ENCODE measurements at regions of chr7 and their contacts with region 1.

Region 1: DNA sequence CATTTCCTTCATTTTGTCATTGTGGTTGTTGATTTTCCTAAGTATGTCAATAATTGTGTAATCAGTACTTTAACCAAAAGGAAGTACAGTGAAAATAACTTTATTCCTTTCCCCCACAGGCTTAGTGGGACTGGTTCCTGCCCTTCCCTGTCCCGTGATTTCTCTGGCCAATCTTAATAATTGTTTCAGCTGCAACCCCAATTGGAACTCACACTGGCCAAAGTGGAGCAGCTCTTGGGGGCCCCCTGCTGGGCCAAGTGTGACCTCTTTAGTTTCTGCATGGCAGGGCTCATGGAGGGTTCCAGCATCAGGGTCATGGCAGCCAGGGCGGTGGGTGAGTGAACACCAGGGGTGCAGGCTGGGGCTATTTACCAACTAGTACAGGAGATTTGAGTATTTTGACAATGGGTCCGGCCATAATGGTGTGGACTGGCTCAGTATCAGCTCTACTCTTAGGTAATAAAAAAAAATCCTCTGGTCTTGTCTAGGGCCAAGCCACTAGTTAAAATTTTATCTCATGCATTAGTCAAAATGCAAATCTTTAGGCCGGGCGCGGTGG is 31.7 kb downstream of the CYCS start:
- DNase-seq: peak; percentile 83
- H3K4me3 ChIP-seq: no peak overlapping the region
- H3K27ac ChIP-seq: no peak overlapping the region
- H3K4me1 ChIP-seq: peaks cover 0 to 6% of the 10 kb centered on the region in 2 experiments; a peak in 1 of 4 replicates
- H3K27me3 ChIP-seq: no peaks in the 10 kb centered on the region
- CTCF ChIP-seq: peak; percentile 99
- EP300 ChIP-seq: no peak
- RAD21 ChIP-seq: peak; percentile 81

Region 2: GRCh38 chr7:24794751-24795731 is 298.3 kb before region 1 on chr7:
- CTCF ChIA-PET with region 1: interaction called, 11 read pairs
- POLR2A ChIA-PET with region 1: no interaction called
- DNase-seq: no peak
- H3K4me3 ChIP-seq: no peak overlapping the region
- H3K27ac ChIP-seq: no peak overlapping the region
- H3K4me1 ChIP-seq: no peaks in the 10 kb centered on the region
- H3K27me3 ChIP-seq: no peaks in the 10 kb centered on the region
- CTCF ChIP-seq: no peak
- EP300 ChIP-seq: no peak
- RAD21 ChIP-seq: no peak

Region 3: GRCh38 chr7:24825931-24826661 is 267.3 kb before region 1 on chr7:
- CTCF ChIA-PET with region 1: interaction called, 88 read pairs
- POLR2A ChIA-PET with region 1: no interaction called
- DNase-seq: no peak
- H3K4me3 ChIP-seq: no peak overlapping the region
- H3K27ac ChIP-seq: peak overlapping the region; percentile 72 to 95; a peak in 3 of 4 replicates
- H3K4me1 ChIP-seq: peaks cover 24 to 60% of the 10 kb centered on the region in 2 experiments
- H3K27me3 ChIP-seq: no peaks in the 10 kb centered on the region
- CTCF ChIP-seq: no peak
- EP300 ChIP-seq: peak in 1 of 2 experiments; percentile 35; a peak in 1 of 4 replicates
- RAD21 ChIP-seq: no peak

Region 4: DNA sequence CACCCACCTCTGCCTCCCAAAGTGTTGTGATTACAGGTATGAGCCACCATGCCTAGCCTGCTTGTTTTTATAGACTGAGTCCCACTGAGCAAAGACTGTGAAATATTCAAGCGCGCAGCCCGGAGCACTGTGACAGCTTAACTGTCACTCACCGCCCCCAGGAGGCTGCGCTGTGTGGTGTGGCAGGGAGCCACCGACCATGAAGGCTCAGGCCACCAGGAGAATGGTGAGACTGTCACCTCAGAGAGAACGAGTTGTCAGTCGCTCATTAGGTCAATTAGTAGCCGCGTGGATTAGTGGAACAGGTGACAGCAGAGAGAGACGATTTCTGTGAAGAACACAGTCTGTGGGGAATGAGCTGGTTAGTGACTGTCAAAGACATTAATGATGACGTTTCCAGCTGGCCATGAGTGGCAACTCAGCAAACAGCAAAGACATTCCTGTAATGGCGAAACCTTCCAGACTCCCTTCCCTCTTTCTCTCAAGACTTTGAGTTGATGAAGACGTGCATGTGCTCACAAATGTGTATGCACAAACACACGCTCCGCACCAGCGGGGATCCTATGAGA is 32.8 kb before region 1 on chr7:
- CTCF ChIA-PET with region 1: interaction called, 29 read pairs
- POLR2A ChIA-PET with region 1: no interaction called
- DNase-seq: no peak
- H3K4me3 ChIP-seq: no peak overlapping the region
- H3K27ac ChIP-seq: no peak overlapping the region
- H3K4me1 ChIP-seq: peaks cover 0 to 6% of the 10 kb centered on the region in 2 experiments; a peak in 1 of 4 replicates
- H3K27me3 ChIP-seq: no peaks in the 10 kb centered on the region
- CTCF ChIP-seq: no peak
- EP300 ChIP-seq: no peak
- RAD21 ChIP-seq: no peak

Region 5: DNA sequence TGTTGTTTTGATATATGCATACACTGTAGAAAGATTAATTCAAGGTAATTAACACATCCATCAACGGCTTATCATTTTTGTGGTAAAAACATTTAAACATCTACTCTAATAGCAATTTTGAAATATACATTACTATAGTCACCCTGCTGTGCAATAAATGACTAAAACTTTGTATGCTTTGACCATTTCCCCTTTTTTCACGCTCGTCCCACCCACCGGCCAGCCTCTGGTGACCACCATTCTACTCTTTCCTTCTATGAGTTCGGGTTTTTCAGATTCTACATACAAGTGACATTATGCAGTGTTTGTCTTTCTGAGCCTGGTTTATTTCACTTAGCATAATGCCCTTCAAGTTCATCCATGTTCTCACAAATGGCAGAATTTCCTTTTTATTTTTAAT is 10.4 kb after region 1 on chr7:
- CTCF ChIA-PET with region 1: interaction called, 38 read pairs
- POLR2A ChIA-PET with region 1: no interaction called
- DNase-seq: no peak
- H3K4me3 ChIP-seq: no peak overlapping the region
- H3K27ac ChIP-seq: no peak overlapping the region
- H3K4me1 ChIP-seq: no peaks in the 10 kb centered on the region
- H3K27me3 ChIP-seq: no peaks in the 10 kb centered on the region
- CTCF ChIP-seq: no peak
- EP300 ChIP-seq: no peak
- RAD21 ChIP-seq: no peak

Measured in SK-N-SH (cell line).